ENCODE measurements at regions of chr5 and their contacts with region 1.

Region 1: DNA sequence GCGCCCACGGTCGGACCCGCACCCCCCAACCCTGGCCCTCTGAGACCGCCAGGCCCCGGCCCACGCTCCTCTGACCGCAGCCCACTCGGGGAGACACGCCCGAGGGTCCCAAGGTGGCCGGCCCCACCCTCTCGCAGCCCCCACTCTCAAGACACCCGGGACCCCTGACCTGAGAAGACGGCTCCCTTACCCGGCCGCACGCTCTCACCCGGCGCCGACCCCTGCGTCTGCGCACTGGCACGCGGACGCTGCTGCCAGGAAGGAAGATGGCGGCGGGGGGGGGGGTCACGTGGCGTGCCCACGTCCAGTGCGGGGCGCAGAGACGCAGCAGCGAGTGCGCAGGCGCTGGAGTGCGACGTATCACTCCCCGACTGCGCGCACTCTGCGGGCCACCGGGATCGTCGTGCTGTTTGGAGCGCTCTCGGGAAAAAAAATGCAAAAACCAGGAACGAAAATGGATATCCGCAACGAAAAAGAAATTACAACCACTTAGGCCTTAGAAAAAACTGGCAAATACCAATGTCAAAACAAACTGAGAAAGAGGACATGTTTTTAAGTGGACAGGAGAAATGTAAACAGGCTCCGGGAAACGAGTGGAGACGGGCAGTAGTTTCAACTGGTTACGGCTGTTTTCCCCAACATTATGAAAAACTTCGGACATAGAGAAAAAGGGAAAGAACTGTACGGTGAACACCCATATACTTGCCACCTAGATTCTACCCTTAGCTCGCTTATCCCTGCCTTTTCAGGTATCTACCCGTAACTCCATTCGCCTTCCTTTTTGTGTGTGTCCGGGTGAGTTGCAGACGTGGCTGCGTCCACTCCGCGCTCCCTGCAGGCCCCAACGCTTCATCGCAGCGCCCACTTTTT is at the start of gene MRPL36:
- DNase-seq: peak; percentile 89 to 97 (median 92)
- ATAC-seq: peak; percentile 73
- H3K4me3 ChIP-seq: peak within 1 kb of the TSS; percentile 82
- H3K4me3 Mint-ChIP-seq: peak within 1 kb of the TSS; percentile 100
- H3K27ac ChIP-seq: peak within 1 kb of the TSS; percentile 74 to 89
- H3K27ac Mint-ChIP-seq: peak within 1 kb of the TSS; percentile 99
- H3K4me1 ChIP-seq: peaks cover 51% of the 10 kb centered on the region
- H3K4me1 Mint-ChIP-seq: peaks cover 65% of the 10 kb centered on the region
- H3K27me3 ChIP-seq: no peaks in the 10 kb centered on the region
- H3K27me3 Mint-ChIP-seq: no peaks in the 10 kb centered on the region
- CTCF ChIP-seq: no peak
- total RNA-seq, gene MRPL36: 14.3 to 18.2 TPM

Region 2: DNA sequence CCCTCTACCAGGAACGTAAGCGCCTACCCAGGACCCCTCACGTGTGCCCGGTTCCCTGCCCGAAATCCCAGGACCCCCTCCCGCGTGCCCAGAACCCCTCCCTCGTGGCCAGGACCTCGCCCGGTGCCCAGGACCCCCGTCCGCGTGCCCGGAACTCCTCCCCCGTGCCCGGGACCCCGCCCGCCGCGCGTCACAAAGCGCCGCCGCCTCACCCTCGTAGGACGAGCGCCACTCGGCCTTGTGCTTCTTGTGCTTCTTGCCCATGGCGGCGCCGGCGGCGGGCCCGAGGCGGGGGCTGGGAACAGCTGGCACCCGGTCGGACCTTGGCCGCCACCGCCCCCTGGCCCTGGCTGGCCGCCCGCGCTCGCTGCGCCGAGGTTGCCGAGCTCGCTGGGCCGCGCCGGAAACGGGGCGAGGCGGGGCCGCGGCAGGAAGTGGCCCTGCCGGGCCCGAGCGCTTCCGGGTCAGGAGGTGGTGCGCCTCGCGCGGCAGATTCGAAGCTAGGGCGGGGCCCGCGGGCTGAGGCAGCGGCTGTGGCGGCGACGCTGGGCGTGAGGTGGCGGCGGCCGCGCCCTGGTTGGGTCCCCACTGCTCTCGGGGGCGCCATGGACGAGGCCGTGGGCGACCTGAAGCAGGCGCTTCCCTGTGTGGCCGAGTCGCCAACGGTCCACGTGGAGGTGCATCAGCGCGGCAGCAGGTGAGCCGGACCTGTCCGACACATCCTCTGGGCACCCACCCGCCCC is 907.3 kb before region 1 on chr5 and contains the starts of genes BRD9 and TRIP13:
- CTCF ChIA-PET with region 1: no interaction called
- POLR2A ChIA-PET with region 1: no interaction called
- intact Hi-C with region 1: loop called in 1 of 2 experiments (anchors 5 kb)
- DNase-seq: peak; percentile 69 to 93 (median 80)
- ATAC-seq: peak; percentile 95
- H3K4me3 ChIP-seq: peak within 1 kb of the TSS; percentile 95
- H3K4me3 Mint-ChIP-seq: peak within 1 kb of the TSS; percentile 92
- H3K27ac ChIP-seq: peak within 1 kb of the TSS; percentile 48 to 67
- H3K27ac Mint-ChIP-seq: peak within 1 kb of the TSS; percentile 90
- H3K4me1 ChIP-seq: peaks cover 30% of the 10 kb centered on the region
- H3K4me1 Mint-ChIP-seq: peaks cover 25% of the 10 kb centered on the region
- H3K27me3 ChIP-seq: no peaks in the 10 kb centered on the region
- H3K27me3 Mint-ChIP-seq: no peaks in the 10 kb centered on the region
- CTCF ChIP-seq: no peak
- total RNA-seq, gene BRD9: 109 TPM
- total RNA-seq, gene TRIP13: 0.47 to 0.66 TPM

Region 3: GRCh38 chr5:1666812-1667588 is 132.8 kb before region 1 on chr5:
- CTCF ChIA-PET with region 1: no interaction called
- POLR2A ChIA-PET with region 1: no interaction called
- intact Hi-C with region 1: loop called in 1 of 2 experiments (anchors 5 kb)
- DNase-seq: peak; percentile 26 to 64 (median 40)
- ATAC-seq: peak; percentile 70
- H3K4me3 ChIP-seq: no peak overlapping the region
- H3K4me3 Mint-ChIP-seq: peak overlapping the region; percentile 27
- H3K27ac ChIP-seq: no peak overlapping the region
- H3K27ac Mint-ChIP-seq: no peak overlapping the region
- H3K4me1 ChIP-seq: peaks cover 17% of the 10 kb centered on the region
- H3K4me1 Mint-ChIP-seq: peaks cover 18% of the 10 kb centered on the region
- H3K27me3 ChIP-seq: peaks cover 54 to 62% of the 10 kb centered on the region in 2 experiments
- H3K27me3 Mint-ChIP-seq: peaks cover 81% of the 10 kb centered on the region
- CTCF ChIP-seq: no peak

Region 4: GRCh38 chr5:1737790-1738405 is 61.9 kb before region 1 on chr5:
- CTCF ChIA-PET with region 1: no interaction called
- POLR2A ChIA-PET with region 1: no interaction called
- intact Hi-C with region 1: loop called (anchors 2 to 5 kb)
- DNase-seq: peak in 12 of 14 experiments; percentile 14 to 69 (median 32)
- ATAC-seq: peak; percentile 59
- H3K4me3 ChIP-seq: no peak overlapping the region
- H3K4me3 Mint-ChIP-seq: no peak overlapping the region
- H3K27ac ChIP-seq: no peak overlapping the region
- H3K27ac Mint-ChIP-seq: no peak overlapping the region
- H3K4me1 ChIP-seq: no peaks in the 10 kb centered on the region
- H3K4me1 Mint-ChIP-seq: no peaks in the 10 kb centered on the region
- H3K27me3 ChIP-seq: peaks cover 2 to 6% of the 10 kb centered on the region in 2 experiments
- H3K27me3 Mint-ChIP-seq: peaks cover 31% of the 10 kb centered on the region
- CTCF ChIP-seq: peak; percentile 86

Region 5: GRCh38 chr5:1772634-1773033 is 27.2 kb before region 1 on chr5:
- CTCF ChIA-PET with region 1: no interaction called
- POLR2A ChIA-PET with region 1: no interaction called
- intact Hi-C with region 1: loop called in 1 of 2 experiments (anchors 2 kb)
- DNase-seq: peak in 2 of 14 experiments; percentile 13 to 19
- ATAC-seq: peak; percentile 44
- H3K4me3 ChIP-seq: no peak overlapping the region
- H3K4me3 Mint-ChIP-seq: no peak overlapping the region
- H3K27ac ChIP-seq: no peak overlapping the region
- H3K27ac Mint-ChIP-seq: no peak overlapping the region
- H3K4me1 ChIP-seq: no peaks in the 10 kb centered on the region
- H3K4me1 Mint-ChIP-seq: no peaks in the 10 kb centered on the region
- H3K27me3 ChIP-seq: no peaks in the 10 kb centered on the region
- H3K27me3 Mint-ChIP-seq: no peaks in the 10 kb centered on the region
- CTCF ChIP-seq: no peak

Measured in CD4-positive, alpha-beta T cell (primary cell).